Calu3 (cell line): ENCODE measurements at regions of chr3 and their contacts with region 1.

Region 1: GRCh38 chr3:6928064-6928463 is 67.1 kb downstream of the GRM7 start:
- DNase-seq: no peak
- H3K4me3 Mint-ChIP-seq: no peak overlapping the region
- H3K27ac Mint-ChIP-seq: peak overlapping the region; percentile 30
- H3K4me1 Mint-ChIP-seq: no peaks in the 10 kb centered on the region
- H3K27me3 Mint-ChIP-seq: no peaks in the 10 kb centered on the region
- CTCF ChIP-seq: no peak

Region 2: GRCh38 chr3:7285505-7285904 is 357.4 kb after region 1 on chr3:
- CTCF ChIA-PET with region 1: no interaction called
- intact Hi-C with region 1: no loop called
- DNase-seq: no peak
- H3K4me3 Mint-ChIP-seq: no peak overlapping the region
- H3K27ac Mint-ChIP-seq: no peak overlapping the region
- H3K4me1 Mint-ChIP-seq: no peaks in the 10 kb centered on the region
- H3K27me3 Mint-ChIP-seq: no peaks in the 10 kb centered on the region
- CTCF ChIP-seq: no peak

Region 3: DNA sequence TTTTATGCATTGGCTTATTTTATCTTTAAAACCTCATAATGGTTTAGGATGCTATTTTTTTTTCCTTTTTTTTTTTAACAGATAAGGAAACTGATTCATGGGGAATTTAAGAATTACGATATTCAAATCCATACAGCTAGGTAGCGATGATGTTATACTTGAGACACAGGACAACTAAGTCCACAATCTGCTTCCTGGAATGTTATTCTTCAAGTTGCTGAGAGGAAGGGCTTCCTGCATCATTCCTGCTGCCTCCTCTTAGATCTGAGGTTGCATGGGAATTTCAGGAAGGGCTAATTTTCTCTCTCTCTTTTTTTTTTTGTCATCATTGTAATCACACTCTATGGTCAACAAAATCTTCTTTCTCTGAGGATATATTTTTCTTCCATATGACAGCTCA is 528.3 kb after region 1 on chr3:
- CTCF ChIA-PET with region 1: no interaction called
- intact Hi-C with region 1: loop called (anchors 5 kb)
- DNase-seq: no peak
- H3K4me3 Mint-ChIP-seq: no peak overlapping the region
- H3K27ac Mint-ChIP-seq: no peak overlapping the region
- H3K4me1 Mint-ChIP-seq: no peaks in the 10 kb centered on the region
- H3K27me3 Mint-ChIP-seq: no peaks in the 10 kb centered on the region
- CTCF ChIP-seq: no peak